Testis (tissue), 5 donors: ENCODE measurements at regions of chr11 and their contacts with region 1.

Region 1: DNA sequence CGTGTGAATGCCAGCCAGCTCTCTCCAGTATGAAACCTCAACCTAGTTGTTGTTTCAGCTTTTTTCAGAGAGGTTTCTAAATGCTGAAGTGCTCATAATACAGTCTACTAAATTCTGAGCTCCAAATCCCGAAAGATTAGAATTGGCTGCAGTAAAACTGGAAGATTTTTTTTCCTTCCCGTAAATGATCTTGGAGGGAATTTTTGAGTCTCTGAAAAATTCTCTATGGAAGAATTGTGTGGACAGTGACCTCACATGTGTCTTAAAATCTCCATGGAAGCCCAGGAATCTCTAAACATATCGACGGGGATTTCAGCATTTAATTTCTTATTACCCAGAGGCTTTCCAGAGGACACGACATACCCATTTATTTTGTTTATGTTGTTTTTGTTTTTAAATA is 1499.2 kb downstream of the LRRC4C start:
- DNase-seq: no peak
- H3K4me3 ChIP-seq: no peak overlapping the region
- H3K27ac ChIP-seq: no peak overlapping the region
- H3K4me1 ChIP-seq: no peaks in the 10 kb centered on the region
- H3K27me3 ChIP-seq: no peaks in the 10 kb centered on the region
- CTCF ChIP-seq: no peak
- POLR2A ChIP-seq: no peak

Region 2: GRCh38 chr11:40281052-40281580 is 320.9 kb after region 1 on chr11:
- intact Hi-C with region 1: loop called (anchors 10 kb)
- DNase-seq: no peak
- H3K4me3 ChIP-seq: no peak overlapping the region
- H3K27ac ChIP-seq: no peak overlapping the region
- H3K4me1 ChIP-seq: no peaks in the 10 kb centered on the region
- H3K27me3 ChIP-seq: no peaks in the 10 kb centered on the region
- CTCF ChIP-seq: no peak
- POLR2A ChIP-seq: no peak